Naive thymus-derived CD4-positive, alpha-beta T cell (primary cell): ENCODE measurements at regions of chr11 and their contacts with region 1.

Region 1: GRCh38 chr11:70202898-70203748 is at the start of gene FADD:
- DNase-seq: peak; percentile 86 to 93 (median 90)
- ATAC-seq: peak; percentile 77
- H3K4me3 ChIP-seq: peak within 1 kb of the TSS; percentile 97
- H3K4me3 Mint-ChIP-seq: peak within 1 kb of the TSS; percentile 92 to 99 (median 96)
- H3K27ac ChIP-seq: peak within 1 kb of the TSS; percentile 81
- H3K27ac Mint-ChIP-seq: peak within 1 kb of the TSS; percentile 93 to 99 (median 97)
- H3K4me1 ChIP-seq: peaks cover 21 to 34% of the 10 kb centered on the region in 2 donors
- H3K4me1 Mint-ChIP-seq: peaks cover 28 to 54% (median 36%) of the 10 kb centered on the region in 7 donors
- H3K27me3 ChIP-seq: no peaks in the 10 kb centered on the region
- H3K27me3 Mint-ChIP-seq: peaks cover 0 to 6% (median 0%) of the 10 kb centered on the region in 5 donors
- total RNA-seq, gene FADD: 9.6 to 40.9 (median 38.4) TPM

Region 2: DNA sequence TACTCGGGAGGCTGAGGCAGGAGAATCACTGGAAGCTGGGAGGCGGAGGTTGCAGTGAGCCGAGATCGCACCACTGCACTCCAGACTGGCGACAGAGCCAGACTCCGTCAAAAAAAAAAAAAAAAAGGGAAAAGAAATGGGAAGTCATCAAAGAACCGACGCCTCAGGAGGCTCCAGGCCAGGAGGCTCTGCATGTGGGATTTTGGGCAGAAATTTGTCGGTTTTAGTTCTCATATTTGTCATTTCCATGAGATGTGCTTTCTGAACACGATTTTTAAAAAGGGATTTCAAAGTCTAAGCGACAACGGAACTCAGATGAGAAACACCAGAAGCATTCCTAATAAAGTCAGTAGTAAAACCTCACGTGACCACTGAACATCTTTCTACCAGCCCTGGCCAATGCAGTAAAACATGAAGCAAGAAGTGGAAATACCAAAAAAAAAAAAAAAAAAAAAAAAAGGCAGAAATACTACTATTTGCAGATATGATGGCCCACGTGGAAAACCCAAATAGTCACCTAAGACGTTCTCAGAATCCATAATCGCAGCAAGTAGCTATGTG is 527.2 kb before region 1 on chr11:
- CTCF ChIA-PET with region 1: no interaction called
- POLR2A ChIA-PET with region 1: interaction called, 3 read pairs
- intact Hi-C with region 1: loop called (anchors 1 to 5 kb)
- DNase-seq: no peak
- ATAC-seq: no peak
- H3K4me3 ChIP-seq: peak overlapping the region; percentile 75
- H3K4me3 Mint-ChIP-seq: peak overlapping the region; percentile 91 to 97 (median 94)
- H3K27ac ChIP-seq: peak overlapping the region; percentile 85
- H3K27ac Mint-ChIP-seq: peak overlapping the region in 3 of 9 donors; percentile 90 to 95 (median 92)
- H3K4me1 ChIP-seq: peaks cover 15 to 19% of the 10 kb centered on the region in 2 donors
- H3K4me1 Mint-ChIP-seq: peaks cover 16 to 37% (median 25%) of the 10 kb centered on the region in 7 donors
- H3K27me3 ChIP-seq: no peaks in the 10 kb centered on the region
- H3K27me3 Mint-ChIP-seq: peaks cover 0 to 13% (median 0%) of the 10 kb centered on the region in 5 donors

Region 3: GRCh38 chr11:70270104-70270876 is 67.2 kb after region 1 on chr11 and contains the start of gene PPFIA1:
- CTCF ChIA-PET with region 1: no interaction called
- POLR2A ChIA-PET with region 1: interaction called, 16 read pairs
- intact Hi-C with region 1: loop called (anchors 1 kb)
- DNase-seq: peak; percentile 93 to 99 (median 96)
- ATAC-seq: peak; percentile 99
- H3K4me3 ChIP-seq: peak within 1 kb of the TSS; percentile 95
- H3K4me3 Mint-ChIP-seq: peak within 1 kb of the TSS; percentile 89 to 94 (median 92)
- H3K27ac ChIP-seq: peak within 1 kb of the TSS; percentile 83
- H3K27ac Mint-ChIP-seq: peak within 1 kb of the TSS; percentile 63 to 96 (median 88)
- H3K4me1 ChIP-seq: peaks cover 4 to 21% of the 10 kb centered on the region in 2 donors
- H3K4me1 Mint-ChIP-seq: peaks cover 13 to 52% (median 42%) of the 10 kb centered on the region in 7 donors
- H3K27me3 ChIP-seq: no peaks in the 10 kb centered on the region
- H3K27me3 Mint-ChIP-seq: peaks cover 8 to 31% (median 14%) of the 10 kb centered on the region in 5 donors
- total RNA-seq, gene PPFIA1: 41.5 to 71.0 (median 52.3) TPM

Region 4: DNA sequence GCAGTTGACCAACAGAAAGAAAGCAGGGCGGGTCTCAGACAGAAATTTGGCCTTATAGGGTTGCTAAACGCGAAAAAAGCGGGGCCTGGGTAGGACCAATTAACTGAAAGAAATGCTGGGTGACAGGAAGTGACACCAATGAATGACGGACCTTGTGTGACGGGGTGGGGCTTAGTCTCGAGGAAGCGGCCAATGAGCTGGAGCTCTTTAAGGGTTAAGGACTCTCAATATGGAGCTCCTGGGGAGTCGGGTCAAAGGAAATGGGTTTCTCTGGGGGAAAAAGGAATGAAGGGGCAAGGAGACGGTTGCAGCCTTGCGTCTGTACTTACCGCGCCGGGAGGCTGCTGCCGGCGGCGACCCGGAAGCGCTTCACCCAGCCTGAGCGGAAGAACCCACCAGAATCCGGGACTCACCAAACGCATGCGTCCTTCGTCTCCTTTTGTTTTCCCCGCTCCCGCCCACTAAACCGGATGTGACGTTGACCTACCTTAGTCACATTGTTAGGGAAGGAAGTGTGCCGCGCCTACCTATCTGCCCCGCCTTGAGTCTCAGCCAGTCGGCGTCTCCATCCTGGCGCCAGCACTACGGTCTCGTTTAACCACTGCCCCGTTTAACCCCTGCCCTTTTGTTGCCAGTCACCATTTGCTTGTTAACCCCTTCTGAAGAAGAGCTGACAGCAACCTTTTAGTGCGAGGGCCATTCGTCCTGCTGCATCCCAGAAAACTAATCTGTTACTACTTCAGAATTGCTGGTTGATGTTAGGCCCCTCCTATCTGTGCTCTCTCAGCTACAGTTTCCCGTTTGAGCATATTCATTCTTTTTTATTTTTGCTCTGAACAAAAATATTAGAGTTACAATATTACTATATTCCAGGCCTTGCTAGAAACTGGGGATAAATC is 1909.4 kb after region 1 on chr11 and contains the start of gene ANAPC15:
- CTCF ChIA-PET with region 1: no interaction called
- POLR2A ChIA-PET with region 1: no interaction called
- intact Hi-C with region 1: loop called in 1 of 2 experiments (anchors 10 kb)
- DNase-seq: peak; percentile 83 to 100 (median 99)
- ATAC-seq: peak; percentile 91
- H3K4me3 ChIP-seq: peak within 1 kb of the TSS; percentile 85
- H3K4me3 Mint-ChIP-seq: peak within 1 kb of the TSS; percentile 73 to 100 (median 96)
- H3K27ac ChIP-seq: peak within 1 kb of the TSS; percentile 92
- H3K27ac Mint-ChIP-seq: peak within 1 kb of the TSS; percentile 97 to 100 (median 98)
- H3K4me1 ChIP-seq: peaks cover 12 to 14% of the 10 kb centered on the region in 2 donors
- H3K4me1 Mint-ChIP-seq: peaks cover 12 to 29% (median 25%) of the 10 kb centered on the region in 7 donors
- H3K27me3 ChIP-seq: no peaks in the 10 kb centered on the region
- H3K27me3 Mint-ChIP-seq: peaks cover 0 to 6% (median 0%) of the 10 kb centered on the region in 5 donors
- total RNA-seq, gene ANAPC15: 43.0 to 59.6 (median 44.1) TPM